Lower leg skin (tissue), 4 donors: ENCODE measurements at regions of chr19 and their contacts with region 1.

Region 1: DNA sequence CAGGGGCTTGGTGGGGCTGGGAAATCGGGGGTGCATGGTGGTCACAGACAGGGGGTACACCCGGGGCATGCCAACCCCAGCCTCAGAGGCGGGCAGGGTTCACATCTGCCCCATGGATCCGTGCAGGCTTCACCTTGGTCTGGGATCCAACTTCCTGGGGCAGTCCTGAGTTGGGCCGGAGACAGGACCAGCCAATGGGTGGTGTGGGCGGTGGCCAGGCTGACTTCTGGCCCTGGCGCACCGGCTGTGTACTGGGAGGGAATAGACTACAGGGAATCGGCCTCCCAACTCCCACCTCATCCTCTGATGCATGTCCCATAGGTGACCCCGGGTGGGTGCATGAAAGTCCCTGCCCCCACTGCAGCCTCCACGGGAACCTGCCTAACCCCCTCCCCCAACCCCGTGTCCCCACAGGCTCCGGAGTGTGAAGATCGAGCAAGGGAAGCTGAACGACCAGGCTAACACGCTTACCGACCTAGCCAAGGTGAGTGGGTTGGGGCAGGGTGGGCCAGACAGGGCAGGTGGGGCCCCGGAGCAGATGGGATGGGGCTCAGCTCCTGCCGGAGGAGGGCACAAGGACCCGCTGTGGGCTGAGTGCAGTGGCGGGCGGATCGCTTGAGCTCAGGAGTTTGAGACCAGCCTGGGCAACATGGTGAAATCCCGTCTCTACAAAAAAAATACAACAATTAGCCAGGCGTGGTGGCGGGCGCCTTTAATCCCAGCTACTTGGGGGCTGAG is 14.7 kb upstream of the ARRDC2 start:
- DNase-seq: no peak
- H3K4me3 ChIP-seq: no peak overlapping the region
- CTCF ChIP-seq: no peak
- POLR2A ChIP-seq: no peak

Region 2: GRCh38 chr19:17865364-17866311 is 127.6 kb before region 1 on chr19:
- intact Hi-C with region 1: loop called (anchors 5 kb)
- DNase-seq: no peak
- H3K4me3 ChIP-seq: no peak overlapping the region
- CTCF ChIP-seq: no peak
- POLR2A ChIP-seq: no peak

Region 3: DNA sequence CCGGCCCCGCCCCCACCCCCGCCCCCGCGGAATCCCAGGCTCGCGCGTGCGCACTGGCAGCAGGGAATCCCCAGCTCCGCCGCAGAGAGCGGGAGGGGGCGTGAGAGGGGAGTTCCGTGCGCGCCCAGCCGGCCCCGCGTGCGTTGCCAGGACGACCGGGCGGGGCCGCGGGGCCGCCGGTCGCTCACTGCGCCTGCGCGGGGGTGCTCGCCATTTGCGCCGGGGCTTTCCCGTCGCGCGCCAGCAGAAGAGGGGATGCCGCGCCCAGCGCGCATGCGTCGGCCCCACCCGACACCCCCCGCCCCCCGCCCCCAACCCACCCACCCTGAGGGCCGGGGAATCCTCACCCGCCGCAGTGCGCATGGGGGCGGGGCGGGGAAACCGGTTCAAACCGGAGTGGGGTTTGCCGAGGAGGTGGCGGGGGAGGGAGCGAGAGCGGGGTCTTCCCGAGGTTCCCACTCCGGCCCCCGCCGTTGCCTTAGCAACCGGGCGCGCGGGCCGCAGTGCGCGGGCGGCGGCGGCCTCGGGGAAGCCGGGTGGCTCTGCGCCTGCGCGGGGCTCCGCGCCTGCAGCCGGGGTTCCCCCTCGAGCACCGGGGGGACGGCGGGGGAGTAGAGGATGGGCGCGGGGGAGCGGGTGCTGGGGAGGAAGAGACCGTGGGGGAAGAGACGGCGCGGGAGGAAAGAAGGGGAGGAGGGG is 45.3 kb before region 1 on chr19:
- intact Hi-C with region 1: loop called (anchors 5 kb)
- DNase-seq: peak; percentile 84 to 97
- H3K4me3 ChIP-seq: peak overlapping the region; percentile 35
- CTCF ChIP-seq: no peak
- POLR2A ChIP-seq: no peak